A549 (cell line): ENCODE measurements at regions of chr12 and their contacts with region 1.

Region 1: DNA sequence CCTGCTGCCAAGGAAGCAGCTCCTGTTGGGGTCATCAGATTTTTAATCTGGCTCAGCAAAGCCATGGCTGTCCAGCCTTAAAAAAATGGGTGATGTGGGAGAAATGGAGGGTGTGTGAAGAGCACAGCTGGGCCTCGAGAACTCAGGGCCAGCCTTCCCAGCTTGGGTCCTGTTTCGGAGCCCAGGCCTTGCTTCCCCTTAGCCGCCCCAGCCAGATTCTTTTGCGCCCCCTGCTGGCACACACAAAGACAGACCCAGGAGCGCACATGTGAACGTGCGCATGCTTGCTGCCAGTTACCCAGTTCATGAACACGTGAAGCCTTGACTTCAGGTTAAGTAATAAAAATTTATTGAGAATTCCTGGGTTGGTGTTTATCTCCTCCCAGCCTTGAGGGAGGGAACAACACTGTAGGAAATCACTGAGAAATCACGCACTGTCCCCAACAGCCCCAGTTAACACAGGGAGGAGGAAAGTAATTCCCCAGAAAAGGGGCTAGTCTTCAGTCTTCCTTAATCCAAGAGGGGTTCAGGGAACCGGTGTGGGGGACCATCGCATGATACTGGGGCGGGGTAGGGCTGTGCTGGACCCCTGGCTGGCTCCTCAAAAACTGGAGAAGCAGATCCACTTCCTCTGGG is 5.3 kb downstream of the PHB2 start:
- DNase-seq: peak; percentile 92 to 93
- ATAC-seq: peak; percentile 64 to 77
- H3K4me3 ChIP-seq: no peak overlapping the region
- H3K27ac ChIP-seq: peak overlapping the region; percentile 50 to 99; a peak in 5 of 6 replicates
- H3K4me1 ChIP-seq: peaks cover 51% of the 10 kb centered on the region
- CTCF ChIP-seq: peak; percentile 89
- EP300 ChIP-seq: no peak
- POLR2A ChIP-seq: no peak
- RAD21 ChIP-seq: peak; percentile 59 to 67; a peak in 4 of 5 replicates

Region 2: GRCh38 chr12:6867413-6868210 is 97.5 kb before region 1 on chr12 and contains the start of gene TPI1:
- CTCF ChIA-PET with region 1: interaction called, 51 read pairs
- POLR2A ChIA-PET with region 1: interaction called, 5 read pairs
- DNase-seq: peak; percentile 77 to 85
- ATAC-seq: peak; percentile 45 to 71
- H3K4me3 ChIP-seq: peak within 1 kb of the TSS; percentile 100
- H3K27ac ChIP-seq: peak within 1 kb of the TSS; percentile 97 to 99
- H3K4me1 ChIP-seq: peaks cover 42% of the 10 kb centered on the region
- CTCF ChIP-seq: no peak
- EP300 ChIP-seq: no peak
- POLR2A ChIP-seq: peak; percentile 99
- RAD21 ChIP-seq: no peak
- polyA plus RNA-seq, gene TPI1: 1,913 and 2,511 TPM in 2 replicates

Region 3: GRCh38 chr12:6921996-6922946 is 42.9 kb before region 1 on chr12:
- CTCF ChIA-PET with region 1: interaction called, 39 read pairs
- POLR2A ChIA-PET with region 1: interaction called, 4 read pairs
- DNase-seq: no peak
- ATAC-seq: no peak
- H3K4me3 ChIP-seq: no peak overlapping the region
- H3K27ac ChIP-seq: no peak overlapping the region
- H3K4me1 ChIP-seq: peaks cover 28% of the 10 kb centered on the region
- CTCF ChIP-seq: no peak
- EP300 ChIP-seq: no peak
- POLR2A ChIP-seq: no peak
- RAD21 ChIP-seq: no peak

Region 4: DNA sequence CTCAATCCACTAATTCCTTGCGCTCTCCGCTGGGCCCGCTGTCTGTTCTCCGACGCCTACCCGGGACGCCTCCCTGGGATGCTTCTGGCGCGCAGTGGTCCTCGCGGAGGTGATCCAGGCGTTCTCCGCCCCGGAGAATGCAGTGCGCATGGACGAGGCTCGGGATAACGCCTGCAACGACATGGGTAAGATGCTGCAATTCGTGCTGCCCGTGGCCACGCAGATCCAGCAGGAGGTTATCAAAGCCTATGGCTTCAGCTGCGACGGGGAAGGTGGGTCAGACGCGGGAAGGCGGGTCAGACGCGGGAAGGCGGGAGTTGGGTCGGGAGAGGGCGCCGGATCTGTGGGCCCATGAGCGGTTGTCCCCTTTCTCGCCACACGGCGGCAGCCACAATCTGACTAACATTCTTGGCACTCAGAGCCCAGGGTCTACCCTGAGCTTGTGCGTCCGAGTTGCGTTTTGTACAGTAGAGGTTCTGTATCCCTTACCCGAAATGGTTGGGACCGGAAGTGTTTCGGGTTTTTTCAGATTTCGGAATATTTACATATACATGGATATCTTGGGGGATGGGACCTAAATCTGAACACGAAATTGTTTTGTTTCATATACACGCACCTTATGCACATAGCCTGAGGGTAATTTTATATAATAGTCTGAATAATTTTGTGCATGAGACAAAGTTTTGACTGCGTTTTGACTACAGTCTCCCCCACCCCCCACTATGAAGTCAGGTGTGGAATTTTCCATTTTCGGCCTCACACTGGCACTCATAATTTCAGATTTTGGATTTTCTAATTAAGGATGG is 20.6 kb before region 1 on chr12:
- CTCF ChIA-PET with region 1: interaction called, 354 read pairs
- POLR2A ChIA-PET with region 1: interaction called, 174 read pairs
- DNase-seq: peak; percentile 93 to 97
- ATAC-seq: peak; percentile 52 to 73
- H3K4me3 ChIP-seq: peak overlapping the region; percentile 59
- H3K27ac ChIP-seq: peak overlapping the region; percentile 80 to 90
- H3K4me1 ChIP-seq: peaks cover 36% of the 10 kb centered on the region
- CTCF ChIP-seq: peak; percentile 85
- EP300 ChIP-seq: no peak
- POLR2A ChIP-seq: no peak; the same call in 1 of the 2 replicates
- RAD21 ChIP-seq: peak; percentile 87

Region 5: DNA sequence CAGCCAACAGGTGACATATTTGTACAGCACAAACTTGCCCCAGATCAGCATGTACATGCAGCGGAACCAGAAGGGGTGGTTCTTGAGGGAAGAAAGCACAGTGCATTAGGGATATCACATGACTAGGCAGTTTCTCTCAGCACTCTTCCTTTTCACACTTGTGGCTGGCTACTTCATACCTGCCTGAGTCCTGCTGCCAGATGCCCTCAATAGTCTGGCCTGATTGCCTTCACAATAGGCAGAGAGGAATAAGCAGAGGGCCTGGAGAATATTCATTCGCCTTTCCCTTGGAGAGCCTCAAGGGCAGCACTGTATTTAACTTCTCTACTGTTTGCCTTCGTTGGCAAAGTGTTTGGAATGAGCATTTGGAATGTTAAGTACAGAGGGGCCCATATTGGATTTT is 13.5 kb after region 1 on chr12:
- CTCF ChIA-PET with region 1: interaction called, 24 read pairs
- POLR2A ChIA-PET with region 1: interaction called, 5 read pairs
- DNase-seq: no peak
- ATAC-seq: peak in 1 of 2 experiments; percentile 35; a peak in 2 of 6 replicates
- H3K4me3 ChIP-seq: no peak overlapping the region
- H3K27ac ChIP-seq: peak overlapping the region in 1 of 2 experiments; percentile 7; a peak in 1 of 6 replicates
- H3K4me1 ChIP-seq: no peaks in the 10 kb centered on the region
- CTCF ChIP-seq: no peak
- EP300 ChIP-seq: no peak
- POLR2A ChIP-seq: no peak
- RAD21 ChIP-seq: no peak